ENCODE measurements at regions of chr14 and their contacts with region 1.

Region 1: DNA sequence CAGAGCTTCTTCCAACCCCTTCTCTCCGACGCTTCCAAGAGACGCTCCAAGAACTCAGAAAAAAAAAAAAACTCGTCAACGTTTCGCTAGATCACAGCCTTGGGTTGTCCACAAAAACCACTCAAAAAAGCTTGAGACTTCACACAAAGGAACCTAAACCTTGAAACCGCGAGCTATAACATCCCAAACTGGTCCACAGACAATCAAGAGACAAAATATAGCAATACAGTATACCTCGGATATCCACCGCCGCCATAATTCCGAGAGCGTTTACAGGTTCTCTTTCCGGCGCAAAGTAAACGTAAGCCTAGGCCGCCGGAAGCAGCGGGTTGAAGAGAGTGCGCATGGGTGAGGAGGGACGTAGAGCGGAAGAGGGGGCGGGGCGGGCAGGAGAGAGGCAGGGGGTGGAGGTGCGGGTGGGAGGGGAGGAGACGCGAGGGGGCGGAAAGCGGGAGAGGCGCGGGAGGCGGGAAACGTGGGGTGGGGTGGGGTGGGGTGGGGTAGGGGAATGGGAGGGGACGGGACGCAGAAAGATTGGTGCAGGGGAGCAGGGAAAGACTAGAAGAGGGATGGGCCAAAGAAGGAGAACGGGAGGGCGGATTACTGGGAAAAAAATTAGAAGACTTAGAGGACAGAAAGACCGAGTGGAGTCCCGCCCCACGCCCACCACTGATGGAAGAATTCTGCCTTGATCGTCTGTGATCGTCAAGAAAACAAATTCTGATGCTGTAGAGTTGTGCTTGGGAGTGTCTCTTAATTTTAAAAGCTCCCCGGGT is at the start of gene MED6:
- DNase-seq: peak; percentile 98
- H3K4me3 Mint-ChIP-seq: peak within 1 kb of the TSS; percentile 96
- H3K27ac Mint-ChIP-seq: peak within 1 kb of the TSS; percentile 94
- H3K4me1 Mint-ChIP-seq: peaks cover 20% of the 10 kb centered on the region
- H3K27me3 Mint-ChIP-seq: peaks cover 16% of the 10 kb centered on the region
- total RNA-seq, gene MED6: 57.0 and 59.7 TPM in 2 replicates

Region 2: GRCh38 chr14:70333289-70333688 is 267.3 kb before region 1 on chr14:
- intact Hi-C with region 1: no loop called
- DNase-seq: no peak
- H3K4me3 Mint-ChIP-seq: no peak overlapping the region
- H3K27ac Mint-ChIP-seq: no peak overlapping the region
- H3K4me1 Mint-ChIP-seq: no peaks in the 10 kb centered on the region
- H3K27me3 Mint-ChIP-seq: no peaks in the 10 kb centered on the region

Region 3: GRCh38 chr14:70611216-70611615 is 10.6 kb after region 1 on chr14:
- intact Hi-C with region 1: no loop called
- DNase-seq: no peak
- H3K4me3 Mint-ChIP-seq: no peak overlapping the region
- H3K27ac Mint-ChIP-seq: no peak overlapping the region
- H3K4me1 Mint-ChIP-seq: no peaks in the 10 kb centered on the region
- H3K27me3 Mint-ChIP-seq: peaks cover 22% of the 10 kb centered on the region

Region 4: DNA sequence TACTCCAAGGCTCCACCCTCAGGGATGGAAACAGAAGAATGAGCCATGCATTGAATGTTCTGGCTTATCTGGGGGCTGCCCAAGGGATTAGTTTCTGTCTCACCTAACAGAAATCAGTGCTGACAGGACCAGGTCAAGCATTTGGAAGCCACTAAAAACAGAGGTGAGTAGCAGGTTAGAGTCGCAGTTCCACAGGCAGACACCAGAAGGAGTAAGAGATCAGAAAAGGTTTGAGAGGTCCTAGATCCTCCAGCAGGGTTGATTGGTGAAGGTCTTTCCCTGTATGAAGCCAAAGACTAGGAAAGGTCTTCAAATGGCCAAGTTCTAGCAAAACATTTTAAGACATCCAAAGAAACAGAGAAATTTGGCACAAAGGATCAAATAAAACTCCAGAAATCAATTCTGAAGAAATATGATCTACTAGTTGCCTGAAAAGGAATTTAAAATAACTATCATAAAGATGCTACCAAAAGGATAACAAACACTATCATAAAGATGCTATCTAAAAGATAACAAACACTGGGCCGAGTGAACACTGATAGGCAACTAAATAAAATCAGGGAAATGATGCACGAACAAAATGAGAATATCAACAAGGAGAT is 21.6 kb after region 1 on chr14:
- intact Hi-C with region 1: no loop called
- DNase-seq: peak; percentile 89
- H3K4me3 Mint-ChIP-seq: no peak overlapping the region
- H3K27ac Mint-ChIP-seq: no peak overlapping the region
- H3K4me1 Mint-ChIP-seq: no peaks in the 10 kb centered on the region
- H3K27me3 Mint-ChIP-seq: peaks cover 16% of the 10 kb centered on the region

Region 5: GRCh38 chr14:70640938-70641547 is 40.5 kb after region 1 on chr14:
- intact Hi-C with region 1: loop called (anchors 2 kb)
- DNase-seq: peak; percentile 82
- H3K4me3 Mint-ChIP-seq: peak overlapping the region; percentile 94
- H3K27ac Mint-ChIP-seq: peak overlapping the region; percentile 94
- H3K4me1 Mint-ChIP-seq: peaks cover 39% of the 10 kb centered on the region
- H3K27me3 Mint-ChIP-seq: peaks cover 2% of the 10 kb centered on the region

Region 6: DNA sequence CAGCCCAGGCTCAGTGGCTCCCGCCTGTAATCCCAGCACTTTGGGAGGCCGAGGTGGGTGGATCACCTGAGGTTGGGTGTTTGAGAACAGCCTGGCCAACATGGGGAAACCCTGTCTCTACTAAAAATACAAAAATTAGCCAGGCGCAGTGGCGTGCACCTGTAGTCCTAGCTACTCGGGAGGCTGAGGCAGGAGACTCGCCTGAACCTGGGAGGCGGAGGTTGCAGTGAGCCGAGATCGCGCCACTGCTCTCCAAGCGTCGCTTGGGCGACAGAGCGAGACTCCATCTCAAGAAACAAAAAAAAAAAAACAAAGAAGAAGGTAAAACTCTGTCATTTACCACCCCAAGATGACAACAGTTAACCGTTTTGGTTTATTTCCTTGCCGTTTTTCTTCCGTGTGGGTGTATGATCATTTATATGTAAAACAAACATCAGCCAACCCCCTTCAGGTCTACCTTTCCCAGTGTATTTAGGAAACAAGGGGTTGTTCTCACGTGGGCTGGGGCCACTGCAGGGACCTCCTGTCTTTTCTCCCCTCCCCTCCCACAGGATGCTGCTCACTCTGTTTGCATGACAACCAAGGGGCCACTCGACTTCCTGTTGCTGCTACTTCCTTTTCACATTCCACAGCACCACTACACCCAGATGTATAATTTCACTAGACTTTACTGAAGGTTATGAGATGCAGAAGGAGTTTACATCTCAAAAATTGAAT is 54.7 kb after region 1 on chr14:
- intact Hi-C with region 1: loop called (anchors 2 kb)
- DNase-seq: peak; percentile 94
- H3K4me3 Mint-ChIP-seq: peak overlapping the region; percentile 85
- H3K27ac Mint-ChIP-seq: peak overlapping the region; percentile 98
- H3K4me1 Mint-ChIP-seq: peaks cover 73% of the 10 kb centered on the region
- H3K27me3 Mint-ChIP-seq: no peaks in the 10 kb centered on the region

Region 7: DNA sequence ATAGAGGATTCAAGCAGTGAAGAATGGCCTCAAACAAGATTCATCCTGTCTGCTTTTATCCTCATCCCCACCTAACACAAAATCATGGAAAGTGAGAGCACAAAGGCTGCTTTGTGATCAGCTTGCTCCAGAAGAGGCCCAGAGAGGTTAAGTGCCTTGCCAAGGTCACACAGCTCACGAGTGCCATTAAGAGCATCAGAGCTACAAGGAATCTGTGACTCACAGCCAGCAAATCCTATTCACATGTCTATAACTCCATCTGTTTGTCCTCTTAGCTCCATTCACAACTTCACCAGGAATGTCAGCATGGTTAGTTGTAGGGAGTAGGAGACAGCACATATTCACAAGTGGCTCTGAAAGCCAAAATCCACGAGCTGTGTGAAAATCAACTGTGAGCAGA is 121.0 kb after region 1 on chr14:
- intact Hi-C with region 1: no loop called
- DNase-seq: no peak
- H3K4me3 Mint-ChIP-seq: no peak overlapping the region
- H3K27ac Mint-ChIP-seq: no peak overlapping the region
- H3K4me1 Mint-ChIP-seq: no peaks in the 10 kb centered on the region
- H3K27me3 Mint-ChIP-seq: peaks cover 4% of the 10 kb centered on the region

Region 8: GRCh38 chr14:70809543-70810244 is 209.1 kb after region 1 on chr14:
- intact Hi-C with region 1: loop called (anchors 5 kb)
- DNase-seq: peak; percentile 96
- H3K4me3 Mint-ChIP-seq: no peak overlapping the region
- H3K27ac Mint-ChIP-seq: peak overlapping the region; percentile 79
- H3K4me1 Mint-ChIP-seq: peaks cover 7% of the 10 kb centered on the region
- H3K27me3 Mint-ChIP-seq: peaks cover 4% of the 10 kb centered on the region

Measured in activated CD4-positive, alpha-beta T cell treated with anti-CD3 and anti-CD28 coated beads, Interleukin-2, amount 10 ng/mL, durations not matched to agents 24 days and 14 days (primary cell).